Panc1 (cell line): ENCODE measurements at regions of chr2 and their contacts with region 1.

Region 1: GRCh38 chr2:84888401-84889276 is 7.8 kb upstream of the TRABD2A start:
- DNase-seq: no peak
- ATAC-seq: peak; percentile 78
- H3K4me3 ChIP-seq: peak overlapping the region; percentile 5 to 34; a peak in 2 of 4 replicates
- H3K27ac ChIP-seq: peak overlapping the region; percentile 49; the same call in 1 of the 2 replicates
- H3K4me1 ChIP-seq: no peaks in the 10 kb centered on the region
- H3K27me3 ChIP-seq: no peaks in the 10 kb centered on the region
- CTCF ChIP-seq: no peak

Region 2: DNA sequence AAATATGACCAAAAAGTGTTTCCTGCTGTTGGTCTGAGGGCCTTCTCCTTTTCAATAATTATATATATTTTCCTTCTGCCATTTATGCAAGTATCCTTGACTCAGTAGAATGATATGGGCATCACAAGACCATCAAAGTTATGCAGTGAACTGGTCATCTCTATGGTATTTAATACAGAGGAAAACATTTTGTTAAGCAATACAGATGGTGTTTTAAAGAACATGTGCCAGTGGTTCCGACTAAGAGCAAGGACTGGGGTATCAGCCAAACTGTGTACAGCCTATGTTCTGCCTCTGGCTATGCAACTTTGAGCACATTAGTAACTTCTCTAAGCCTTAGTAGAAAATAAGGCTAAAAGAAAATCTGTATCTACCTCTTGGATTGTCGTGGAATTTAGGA is 186.7 kb before region 1 on chr2:
- CTCF ChIA-PET with region 1: no interaction called
- POLR2A ChIA-PET with region 1: no interaction called
- in situ Hi-C with region 1: no loop called
- intact Hi-C with region 1: no loop called
- DNase-seq: no peak
- ATAC-seq: no peak
- H3K4me3 ChIP-seq: no peak overlapping the region
- H3K27ac ChIP-seq: no peak overlapping the region
- H3K4me1 ChIP-seq: no peaks in the 10 kb centered on the region
- H3K27me3 ChIP-seq: peaks cover 3% of the 10 kb centered on the region; the same call in 1 of the 2 replicates
- CTCF ChIP-seq: no peak

Region 3: DNA sequence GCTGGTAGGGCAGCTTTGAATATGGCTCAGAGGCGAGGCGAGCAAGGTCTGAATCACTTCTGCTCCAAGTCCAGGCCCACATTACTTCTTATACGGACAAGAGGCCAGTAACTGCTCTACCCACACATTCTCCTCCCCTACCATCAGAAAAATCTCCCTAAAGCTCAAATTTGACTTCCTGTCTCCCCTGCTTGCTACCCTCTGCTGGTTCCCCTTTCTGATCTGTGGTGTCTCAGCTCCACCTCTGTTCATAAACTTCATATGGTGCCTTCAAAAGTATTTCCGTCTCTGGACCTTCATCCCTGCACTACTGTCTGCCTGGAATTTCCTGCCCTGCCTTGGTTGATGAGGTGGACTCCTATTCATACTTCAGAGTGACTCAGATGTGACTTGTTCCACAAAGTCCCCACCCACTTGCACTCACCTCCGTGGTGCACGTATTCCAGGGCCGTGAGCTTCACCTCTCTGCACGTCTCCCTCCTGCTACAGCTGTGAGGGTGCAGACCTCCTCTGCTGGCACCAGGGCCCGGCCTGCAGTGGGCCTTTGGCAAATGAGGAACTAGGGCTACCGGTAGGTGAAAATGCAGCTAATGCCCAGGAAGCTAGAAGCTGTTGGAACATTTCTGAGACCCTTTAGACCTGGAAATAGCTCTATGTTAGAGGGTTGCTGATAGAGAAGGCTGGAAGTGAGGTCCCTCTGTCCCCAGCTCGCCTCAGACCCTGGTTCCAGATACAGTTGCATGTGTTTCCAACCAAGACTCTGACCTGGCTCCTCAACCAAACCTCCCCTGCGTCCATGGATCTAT is 57.8 kb after region 1 on chr2:
- CTCF ChIA-PET with region 1: no interaction called
- POLR2A ChIA-PET with region 1: interaction called, 14 read pairs
- in situ Hi-C with region 1: no loop called
- intact Hi-C with region 1: no loop called
- DNase-seq: peak; percentile 91
- ATAC-seq: peak; percentile 96
- H3K4me3 ChIP-seq: peak overlapping the region in 1 of 2 experiments; percentile 23; a peak in 1 of 4 replicates
- H3K27ac ChIP-seq: peak overlapping the region; percentile 90
- H3K4me1 ChIP-seq: peaks cover 18% of the 10 kb centered on the region
- H3K27me3 ChIP-seq: no peaks in the 10 kb centered on the region
- CTCF ChIP-seq: no peak